ENCODE measurements at regions of chr12 and their contacts with region 1.

Region 1: GRCh38 chr12:120292661-120293531 is at the start of gene RNU4-1:
- DNase-seq: peak; percentile 93
- ATAC-seq: peak; percentile 45
- H3K4me3 ChIP-seq: peak within 1 kb of the TSS; percentile 59 to 74 (median 71)
- H3K27ac ChIP-seq: peak within 1 kb of the TSS; percentile 100
- H3K4me1 ChIP-seq: peaks cover 26% of the 10 kb centered on the region; the same call in 1 of the 2 replicates
- H3K27me3 ChIP-seq: no peaks in the 10 kb centered on the region; a peak in 1 of 5 replicates
- CTCF ChIP-seq: no peak
- EP300 ChIP-seq: peak in 1 of 2 experiments; percentile 63; a peak in 2 of 4 replicates
- POLR2A ChIP-seq: peak; percentile 99 to 100
- RAD21 ChIP-seq: peak; percentile 22; the same call in 1 of the 2 replicates
- total RNA-seq, gene RNU4-1: 623 and 7,407 TPM in 2 replicates

Region 2: GRCh38 chr12:120181991-120182631 is 110.8 kb before region 1 on chr12:
- CTCF ChIA-PET with region 1: no interaction called
- POLR2A ChIA-PET with region 1: interaction called, 17 read pairs
- in situ Hi-C with region 1: no loop called
- intact Hi-C with region 1: no loop called
- DNase-seq: peak; percentile 63
- ATAC-seq: peak; percentile 89
- H3K4me3 ChIP-seq: no peak overlapping the region
- H3K27ac ChIP-seq: peak overlapping the region; percentile 54
- H3K4me1 ChIP-seq: peaks cover 36% of the 10 kb centered on the region
- H3K27me3 ChIP-seq: no peaks in the 10 kb centered on the region
- CTCF ChIP-seq: no peak
- EP300 ChIP-seq: no peak
- POLR2A ChIP-seq: no peak
- RAD21 ChIP-seq: no peak

Region 3: GRCh38 chr12:120216742-120217605 is 75.9 kb before region 1 on chr12:
- CTCF ChIA-PET with region 1: no interaction called
- POLR2A ChIA-PET with region 1: interaction called, 30 read pairs
- in situ Hi-C with region 1: no loop called
- intact Hi-C with region 1: no loop called
- DNase-seq: no peak
- ATAC-seq: no peak
- H3K4me3 ChIP-seq: no peak overlapping the region
- H3K27ac ChIP-seq: no peak overlapping the region
- H3K4me1 ChIP-seq: peaks cover 40% of the 10 kb centered on the region
- H3K27me3 ChIP-seq: no peaks in the 10 kb centered on the region; a peak in 1 of 5 replicates
- CTCF ChIP-seq: no peak
- EP300 ChIP-seq: no peak
- POLR2A ChIP-seq: 0 out of 4 replicates have a peak, but pooled peaks of 1 of the 2 experiments have one; percentile 23
- RAD21 ChIP-seq: no peak

Region 4: GRCh38 chr12:120234643-120235368 is 58.1 kb before region 1 on chr12:
- CTCF ChIA-PET with region 1: no interaction called
- POLR2A ChIA-PET with region 1: interaction called, 461 read pairs
- in situ Hi-C with region 1: no loop called
- intact Hi-C with region 1: no loop called
- DNase-seq: peak; percentile 85
- ATAC-seq: peak; percentile 81
- H3K4me3 ChIP-seq: no peak overlapping the region; a peak in 1 of 6 replicates
- H3K27ac ChIP-seq: no peak overlapping the region
- H3K4me1 ChIP-seq: peaks cover 66% of the 10 kb centered on the region
- H3K27me3 ChIP-seq: no peaks in the 10 kb centered on the region
- CTCF ChIP-seq: peak; percentile 78
- EP300 ChIP-seq: no peak
- POLR2A ChIP-seq: no peak
- RAD21 ChIP-seq: peak; percentile 50; the same call in 1 of the 2 replicates

Region 5: DNA sequence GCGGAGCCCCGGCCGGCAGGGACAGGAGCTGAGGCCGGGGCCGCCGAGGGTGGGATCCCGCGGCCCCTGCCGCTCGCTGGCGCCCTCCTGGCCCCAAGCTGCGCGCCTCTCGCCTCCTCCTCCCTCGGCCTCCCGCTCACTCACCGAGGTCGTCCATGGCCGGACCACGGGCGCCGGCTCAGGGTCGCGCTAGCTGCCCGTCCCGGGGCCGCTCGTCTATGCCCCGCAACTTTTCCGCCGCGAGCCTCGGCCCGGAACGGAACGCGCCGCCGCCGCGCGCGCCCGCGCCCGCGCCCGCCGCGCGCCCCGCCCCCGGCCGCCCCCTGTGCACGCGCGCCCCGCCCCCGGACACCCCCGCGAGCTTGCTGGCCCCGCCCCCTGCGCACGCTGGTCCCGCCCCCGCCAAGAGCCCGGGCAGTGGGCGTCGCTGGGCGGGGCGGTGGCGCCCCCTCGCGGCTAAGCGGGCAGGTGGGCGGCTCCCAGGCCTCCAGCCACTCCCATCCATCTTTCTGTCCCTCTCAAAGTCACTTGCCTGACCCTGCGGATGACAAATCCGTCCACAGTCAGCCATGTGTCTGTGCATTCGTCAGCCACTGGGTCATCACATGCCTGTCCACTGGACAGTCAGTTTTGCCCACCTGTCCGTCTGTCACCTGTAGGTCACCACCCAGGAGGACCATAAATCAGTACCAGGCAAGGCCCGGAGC is 27.3 kb before region 1 on chr12 and contains the start of gene PXN:
- CTCF ChIA-PET with region 1: no interaction called
- POLR2A ChIA-PET with region 1: interaction called, 124 read pairs
- in situ Hi-C with region 1: no loop called
- intact Hi-C with region 1: no loop called
- DNase-seq: peak; percentile 73
- ATAC-seq: peak; percentile 80
- H3K4me3 ChIP-seq: peak within 1 kb of the TSS; percentile 76 to 97 (median 88)
- H3K27ac ChIP-seq: peak within 1 kb of the TSS; percentile 53
- H3K4me1 ChIP-seq: peaks cover 71% of the 10 kb centered on the region
- H3K27me3 ChIP-seq: no peaks in the 10 kb centered on the region
- CTCF ChIP-seq: peak; percentile 85
- EP300 ChIP-seq: peak in 1 of 2 experiments; percentile 41; a peak in 1 of 4 replicates
- POLR2A ChIP-seq: peak; percentile 41 to 66; a peak in 3 of 4 replicates
- RAD21 ChIP-seq: peak; percentile 91
- total RNA-seq, gene PXN: 13.6 and 14.2 TPM in 2 replicates

Region 6: GRCh38 chr12:120317224-120318105 is 24.6 kb after region 1 on chr12:
- CTCF ChIA-PET with region 1: no interaction called
- POLR2A ChIA-PET with region 1: interaction called, 76 read pairs
- in situ Hi-C with region 1: no loop called
- intact Hi-C with region 1: no loop called
- DNase-seq: peak; percentile 99
- ATAC-seq: peak; percentile 89
- H3K4me3 ChIP-seq: peak overlapping the region; percentile 70 to 82 (median 70)
- H3K27ac ChIP-seq: peak overlapping the region; percentile 90
- H3K4me1 ChIP-seq: peaks cover 34% of the 10 kb centered on the region
- H3K27me3 ChIP-seq: no peaks in the 10 kb centered on the region; a peak in 1 of 5 replicates
- CTCF ChIP-seq: peak; percentile 81
- EP300 ChIP-seq: peak in 1 of 2 experiments; percentile 23; a peak in 1 of 4 replicates
- POLR2A ChIP-seq: peak; percentile 84 to 90
- RAD21 ChIP-seq: 0 out of 2 replicates have a peak, but pooled peaks have one; percentile 30

Region 7: GRCh38 chr12:120469450-120470149 is 176.7 kb after region 1 on chr12 and contains the start of gene SRSF9:
- CTCF ChIA-PET with region 1: no interaction called
- POLR2A ChIA-PET with region 1: no interaction called
- in situ Hi-C with region 1: no loop called
- intact Hi-C with region 1: no loop called
- DNase-seq: peak; percentile 90
- ATAC-seq: peak; percentile 91
- H3K4me3 ChIP-seq: peak within 1 kb of the TSS; percentile 74 to 85 (median 81)
- H3K27ac ChIP-seq: peak within 1 kb of the TSS; percentile 78
- H3K4me1 ChIP-seq: peaks cover 62% of the 10 kb centered on the region
- H3K27me3 ChIP-seq: no peaks in the 10 kb centered on the region; a peak in 1 of 5 replicates
- CTCF ChIP-seq: peak; percentile 96
- EP300 ChIP-seq: 0 out of 4 replicates have a peak, but pooled peaks of 1 of the 2 experiments have one; percentile 10
- POLR2A ChIP-seq: peak; percentile 58 to 72
- RAD21 ChIP-seq: peak; percentile 53; the same call in 1 of the 2 replicates
- total RNA-seq, gene SRSF9: 144 and 153 TPM in 2 replicates

Measured in HepG2 (cell line).